Heart left ventricle (tissue), 16 donors: ENCODE measurements at regions of chr20 and their contacts with region 1.

Region 1: GRCh38 chr20:62571667-62572344 is 70.5 kb upstream of the SLCO4A1 start:
- DNase-seq: no peak
- ATAC-seq: peak; percentile 20 to 46 (median 33)
- H3K4me3 ChIP-seq: no peak overlapping the region
- H3K27ac ChIP-seq: peak overlapping the region in 1 of 12 donors; percentile 26
- H3K4me1 ChIP-seq: peaks cover 0 to 17% (median 0%) of the 10 kb centered on the region in 12 donors
- H3K27me3 ChIP-seq: peaks cover 0 to 28% (median 9%) of the 10 kb centered on the region in 9 donors
- CTCF ChIP-seq: peak in 1 of 12 donors; percentile 7
- POLR2A ChIP-seq: peak in 1 of 2 donors; percentile 12

Region 2: DNA sequence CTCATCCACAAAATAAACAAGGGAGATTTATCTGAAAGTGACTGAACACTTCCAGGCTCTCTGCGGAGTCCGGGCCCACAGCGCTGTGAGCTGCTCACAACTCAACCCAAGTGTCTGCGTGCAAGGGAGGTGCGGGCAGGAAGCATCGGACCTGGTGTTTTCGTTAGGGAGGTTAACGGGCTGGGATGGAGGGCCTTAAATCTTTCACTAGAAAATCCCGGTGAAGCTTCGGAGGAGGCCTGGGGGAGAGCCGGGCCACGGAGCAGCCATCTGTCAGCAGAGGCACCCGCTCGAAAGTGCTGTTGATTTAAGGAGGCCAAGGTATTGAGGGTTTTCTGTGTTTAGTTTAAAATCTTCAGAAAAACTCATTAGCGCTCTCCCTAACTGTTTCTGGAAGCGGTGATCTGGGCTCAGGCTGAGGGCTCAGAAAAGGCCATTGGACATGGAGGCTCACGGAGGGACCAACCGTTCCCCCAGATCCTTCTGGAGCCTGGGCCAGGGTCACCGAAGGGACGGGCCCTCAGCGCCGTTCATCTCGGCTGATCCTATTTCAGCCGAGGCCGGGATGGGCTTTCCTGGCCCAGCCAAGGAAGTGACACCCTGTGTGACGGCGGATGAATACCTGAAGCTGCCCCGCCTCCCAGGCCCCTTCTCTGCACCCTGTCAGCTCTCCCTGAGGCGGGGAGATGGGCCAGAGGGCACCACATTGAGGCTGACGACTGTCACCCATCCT is 116.7 kb before region 1 on chr20:
- intact Hi-C with region 1: no loop called
- DNase-seq: no peak
- ATAC-seq: no peak
- H3K4me3 ChIP-seq: no peak overlapping the region
- H3K27ac ChIP-seq: no peak overlapping the region
- H3K4me1 ChIP-seq: peaks cover 0 to 1% (median 0%) of the 10 kb centered on the region in 12 donors
- H3K27me3 ChIP-seq: peaks cover 0 to 28% (median 6%) of the 10 kb centered on the region in 9 donors
- CTCF ChIP-seq: no peak
- POLR2A ChIP-seq: no peak

Region 3: GRCh38 chr20:62516345-62516744 is 55.5 kb before region 1 on chr20:
- intact Hi-C with region 1: loop called in 2 of 10 experiments (anchors 10 kb)
- DNase-seq: peak in 2 of 5 donors; percentile 44 to 68
- ATAC-seq: peak in 3 of 4 donors; percentile 53 to 65 (median 61)
- H3K4me3 ChIP-seq: no peak overlapping the region
- H3K27ac ChIP-seq: no peak overlapping the region
- H3K4me1 ChIP-seq: peaks cover 0 to 16% (median 7%) of the 10 kb centered on the region in 12 donors
- H3K27me3 ChIP-seq: peaks cover 0 to 34% (median 0%) of the 10 kb centered on the region in 9 donors
- CTCF ChIP-seq: peak in 11 of 12 donors; percentile 26 to 57 (median 38)
- POLR2A ChIP-seq: no peak

Region 4: GRCh38 chr20:62636446-62636845 is 64.6 kb after region 1 on chr20:
- intact Hi-C with region 1: loop called in 1 of 10 experiments (anchors 10 kb)
- DNase-seq: peak in 1 of 5 donors; percentile 62
- ATAC-seq: peak; percentile 25 to 69 (median 37)
- H3K4me3 ChIP-seq: no peak overlapping the region
- H3K27ac ChIP-seq: peak overlapping the region in 2 of 12 donors; percentile 26 to 33
- H3K4me1 ChIP-seq: peaks cover 0 to 16% (median under 1%) of the 10 kb centered on the region in 12 donors
- H3K27me3 ChIP-seq: peaks cover 0 to 27% (median 9%) of the 10 kb centered on the region in 9 donors
- CTCF ChIP-seq: no peak
- POLR2A ChIP-seq: no peak